ENCODE measurements at regions of chr4 and their contacts with region 1.

Region 1: GRCh38 chr4:26319467-26319948 is 1.3 kb upstream of the RBPJ start:
- DNase-seq: peak; percentile 99
- H3K4me3 ChIP-seq: peak overlapping the region; percentile 92
- H3K27ac ChIP-seq: peak overlapping the region; percentile 94
- H3K4me1 ChIP-seq: peaks cover 16% of the 10 kb centered on the region
- H3K27me3 ChIP-seq: no peaks in the 10 kb centered on the region
- CTCF ChIP-seq: no peak

Region 2: DNA sequence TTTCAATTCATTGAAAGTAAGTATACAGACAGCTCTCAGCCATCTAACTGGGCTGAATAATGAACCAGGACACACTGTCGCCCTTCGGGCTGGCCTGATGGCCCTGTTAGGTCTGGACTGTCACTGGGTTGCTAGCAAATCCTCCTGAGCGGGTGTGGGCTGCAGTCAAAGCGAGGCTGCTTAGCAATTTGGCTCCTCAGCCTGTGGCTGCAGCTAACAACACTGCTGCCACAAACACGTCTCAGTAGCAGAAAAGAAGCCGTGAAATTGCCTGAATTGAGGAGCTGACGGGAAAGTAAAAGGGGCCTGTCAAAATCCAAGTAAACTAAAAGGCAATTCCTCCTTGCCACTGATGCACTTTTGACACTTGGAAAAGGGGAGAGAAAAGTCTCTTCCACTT is 332.7 kb before region 1 on chr4:
- CTCF ChIA-PET with region 1: no interaction called
- POLR2A ChIA-PET with region 1: no interaction called
- intact Hi-C with region 1: loop called (anchors 5 kb)
- DNase-seq: no peak
- H3K4me3 ChIP-seq: no peak overlapping the region
- H3K27ac ChIP-seq: no peak overlapping the region
- H3K4me1 ChIP-seq: peaks cover 3% of the 10 kb centered on the region
- H3K27me3 ChIP-seq: no peaks in the 10 kb centered on the region
- CTCF ChIP-seq: no peak

Region 3: GRCh38 chr4:26081795-26082498 is 237.6 kb before region 1 on chr4:
- CTCF ChIA-PET with region 1: no interaction called
- POLR2A ChIA-PET with region 1: no interaction called
- intact Hi-C with region 1: loop called (anchors 5 kb)
- DNase-seq: peak; percentile 59
- H3K4me3 ChIP-seq: no peak overlapping the region
- H3K27ac ChIP-seq: no peak overlapping the region
- H3K4me1 ChIP-seq: no peaks in the 10 kb centered on the region
- H3K27me3 ChIP-seq: peaks cover 44% of the 10 kb centered on the region
- CTCF ChIP-seq: peak; percentile 84

Region 4: GRCh38 chr4:26238778-26239679 is 80.5 kb before region 1 on chr4:
- CTCF ChIA-PET with region 1: no interaction called
- POLR2A ChIA-PET with region 1: no interaction called
- intact Hi-C with region 1: no loop called
- DNase-seq: no peak
- H3K4me3 ChIP-seq: no peak overlapping the region
- H3K27ac ChIP-seq: no peak overlapping the region
- H3K4me1 ChIP-seq: no peaks in the 10 kb centered on the region
- H3K27me3 ChIP-seq: no peaks in the 10 kb centered on the region
- CTCF ChIP-seq: no peak

Region 5: DNA sequence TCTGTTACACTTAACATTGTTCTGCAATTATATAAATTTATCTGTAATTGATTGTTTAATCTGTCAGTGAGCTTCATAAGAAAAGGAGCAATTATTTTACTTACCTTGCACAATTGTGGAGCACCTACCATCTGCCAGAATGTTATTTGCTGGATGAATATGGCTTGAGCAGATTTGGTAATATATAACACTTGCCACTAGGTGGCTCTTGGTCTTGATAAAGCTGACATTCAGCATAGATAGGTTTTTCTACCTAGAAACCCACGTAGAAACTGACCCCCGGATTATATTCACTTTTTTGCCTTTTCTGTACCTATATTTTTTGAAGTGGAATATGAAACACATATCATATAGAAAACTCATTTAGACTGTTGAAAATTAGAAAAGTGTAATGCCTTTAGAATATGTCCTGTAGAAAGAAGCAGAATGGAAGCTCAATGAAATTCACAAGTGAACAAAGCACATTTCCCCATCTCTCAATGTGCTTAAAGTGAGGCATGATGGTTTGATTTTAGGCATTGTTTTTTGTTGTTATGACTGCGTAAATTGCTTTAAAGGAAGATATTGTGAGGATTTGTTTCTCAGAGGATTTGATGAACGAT is 10.8 kb after region 1 on chr4:
- CTCF ChIA-PET with region 1: no interaction called
- POLR2A ChIA-PET with region 1: no interaction called
- intact Hi-C with region 1: no loop called
- DNase-seq: peak; percentile 68
- H3K4me3 ChIP-seq: no peak overlapping the region
- H3K27ac ChIP-seq: no peak overlapping the region
- H3K4me1 ChIP-seq: peaks cover 3% of the 10 kb centered on the region
- H3K27me3 ChIP-seq: no peaks in the 10 kb centered on the region
- CTCF ChIP-seq: peak; percentile 82

Region 6: DNA sequence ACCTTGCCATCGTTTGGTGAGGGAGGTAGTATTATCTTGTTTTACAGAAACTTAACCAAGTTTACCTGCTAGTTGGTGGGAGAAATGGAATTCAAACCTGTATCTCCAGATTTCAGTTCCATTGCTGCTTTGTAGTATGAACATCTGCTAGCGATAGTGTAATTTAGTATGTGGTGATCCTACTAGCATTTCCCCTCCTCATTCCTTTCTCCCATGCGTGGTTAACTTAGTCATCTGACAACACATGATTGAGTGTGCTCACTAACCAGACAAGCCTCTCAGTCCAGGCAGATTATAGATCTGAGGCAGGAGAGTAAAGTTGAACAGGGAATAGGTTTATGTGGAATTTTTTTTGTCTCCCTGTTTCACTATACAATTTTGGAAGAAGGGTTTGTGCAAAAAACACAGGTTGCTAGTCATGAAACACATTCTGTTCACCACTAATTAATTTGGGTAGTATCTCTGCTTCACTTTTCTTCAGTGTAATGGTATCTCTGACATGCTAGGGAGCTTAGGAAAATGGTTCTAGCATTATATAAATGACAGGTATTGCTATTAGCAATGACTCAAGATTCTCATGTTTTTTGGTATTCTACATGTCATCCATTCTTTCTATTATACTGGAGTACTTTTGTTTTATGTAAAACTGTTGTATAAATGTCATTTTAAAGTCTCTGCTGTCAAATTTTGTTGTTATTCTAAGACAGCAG is 23.0 kb after region 1 on chr4:
- CTCF ChIA-PET with region 1: no interaction called
- POLR2A ChIA-PET with region 1: no interaction called
- intact Hi-C with region 1: no loop called
- DNase-seq: peak; percentile 20
- H3K4me3 ChIP-seq: no peak overlapping the region
- H3K27ac ChIP-seq: no peak overlapping the region
- H3K4me1 ChIP-seq: peaks cover 21% of the 10 kb centered on the region
- H3K27me3 ChIP-seq: no peaks in the 10 kb centered on the region
- CTCF ChIP-seq: no peak

Region 7: DNA sequence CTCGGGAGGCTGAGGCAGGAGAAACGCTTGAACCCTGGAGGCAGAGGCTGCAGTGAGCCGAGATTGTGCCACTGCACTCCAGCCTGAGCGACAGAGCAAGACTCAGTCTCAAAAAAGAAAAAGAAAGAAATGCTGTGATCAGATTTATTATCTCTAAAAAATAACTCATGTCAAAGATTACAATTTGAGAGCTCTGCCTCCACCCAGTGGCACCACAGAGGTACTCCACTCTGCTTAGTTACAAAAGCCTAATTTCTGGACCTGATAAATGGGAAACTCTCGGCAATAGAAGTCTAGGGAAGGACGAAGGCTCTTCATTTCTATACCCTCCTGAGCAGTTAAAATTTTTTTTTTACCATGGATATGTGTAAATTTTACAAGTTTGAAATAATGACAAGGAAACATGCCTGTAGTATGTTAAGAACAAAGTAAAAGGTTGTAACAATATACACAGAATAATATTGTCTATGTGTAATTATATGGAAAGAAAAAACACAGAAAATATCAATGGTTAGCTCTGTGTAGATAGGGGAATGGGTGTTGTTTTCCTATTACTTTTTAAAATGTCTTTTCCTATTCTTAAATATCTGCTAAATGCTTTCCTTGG is 690.9 kb after region 1 on chr4:
- CTCF ChIA-PET with region 1: no interaction called
- POLR2A ChIA-PET with region 1: no interaction called
- intact Hi-C with region 1: loop called (anchors 10 kb)
- DNase-seq: peak; percentile 84
- H3K4me3 ChIP-seq: no peak overlapping the region
- H3K27ac ChIP-seq: no peak overlapping the region
- H3K4me1 ChIP-seq: peaks cover 36% of the 10 kb centered on the region
- H3K27me3 ChIP-seq: no peaks in the 10 kb centered on the region
- CTCF ChIP-seq: peak; percentile 89

Measured in A673 (cell line).